CD4-positive, alpha-beta memory T cell (primary cell): ENCODE measurements at regions of chr12 and their contacts with region 1.

Region 1: DNA sequence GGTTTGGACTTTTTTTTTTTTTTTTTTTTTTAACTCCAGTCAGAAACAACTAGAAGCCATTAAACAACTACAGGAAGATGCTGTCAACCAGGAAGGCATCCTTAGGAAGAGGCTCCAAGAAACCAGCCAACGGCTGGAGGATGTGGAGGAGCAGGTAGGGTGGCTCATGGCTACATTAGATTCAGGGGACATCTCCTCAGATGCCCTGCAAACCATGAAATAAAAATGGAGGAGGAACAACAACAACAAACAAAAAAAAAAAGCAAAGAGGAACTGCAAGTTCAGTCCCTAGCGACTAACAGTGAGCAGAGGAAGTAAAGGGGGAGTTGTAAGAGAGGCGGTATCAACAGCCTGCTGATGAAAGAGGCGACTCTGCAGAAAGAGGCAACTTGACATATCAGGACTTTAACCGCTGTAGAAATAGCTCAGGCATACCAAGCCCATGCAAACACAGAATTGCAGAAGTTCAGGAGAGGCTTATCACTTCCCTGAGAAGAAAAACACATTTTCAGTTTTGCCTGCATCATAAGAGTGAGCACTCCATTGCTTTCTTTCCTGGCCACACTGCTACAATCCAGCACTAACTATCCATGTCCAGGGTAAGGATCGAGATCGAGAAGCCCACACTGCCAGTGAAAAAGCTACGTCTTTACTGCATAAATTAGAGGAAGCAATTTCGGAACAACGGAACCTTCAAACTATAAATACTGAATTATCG is 103.5 kb upstream of the BCAT1 start:
- DNase-seq: peak; percentile 82 to 91 (median 88)
- H3K4me3 ChIP-seq: peak overlapping the region; percentile 72 to 88
- H3K4me3 Mint-ChIP-seq: peak overlapping the region; percentile 93 to 100 (median 96)
- H3K27ac ChIP-seq: peak overlapping the region; percentile 52
- H3K27ac Mint-ChIP-seq: peak overlapping the region; percentile 97 to 99 (median 98)
- H3K4me1 ChIP-seq: peaks cover 51% of the 10 kb centered on the region
- H3K4me1 Mint-ChIP-seq: peaks cover 33 to 56% (median 44%) of the 10 kb centered on the region in 4 donors
- H3K27me3 ChIP-seq: no peaks in the 10 kb centered on the region
- H3K27me3 Mint-ChIP-seq: no peaks in the 10 kb centered on the region

Region 2: GRCh38 chr12:24922090-24922489 is 130.3 kb before region 1 on chr12:
- CTCF ChIA-PET with region 1: no interaction called
- POLR2A ChIA-PET with region 1: no interaction called
- intact Hi-C with region 1: no loop called
- DNase-seq: no peak
- H3K4me3 ChIP-seq: no peak overlapping the region
- H3K4me3 Mint-ChIP-seq: no peak overlapping the region
- H3K27ac ChIP-seq: no peak overlapping the region
- H3K27ac Mint-ChIP-seq: no peak overlapping the region
- H3K4me1 ChIP-seq: no peaks in the 10 kb centered on the region
- H3K4me1 Mint-ChIP-seq: peaks cover 0 to 4% (median under 1%) of the 10 kb centered on the region in 4 donors
- H3K27me3 ChIP-seq: no peaks in the 10 kb centered on the region
- H3K27me3 Mint-ChIP-seq: no peaks in the 10 kb centered on the region

Region 3: DNA sequence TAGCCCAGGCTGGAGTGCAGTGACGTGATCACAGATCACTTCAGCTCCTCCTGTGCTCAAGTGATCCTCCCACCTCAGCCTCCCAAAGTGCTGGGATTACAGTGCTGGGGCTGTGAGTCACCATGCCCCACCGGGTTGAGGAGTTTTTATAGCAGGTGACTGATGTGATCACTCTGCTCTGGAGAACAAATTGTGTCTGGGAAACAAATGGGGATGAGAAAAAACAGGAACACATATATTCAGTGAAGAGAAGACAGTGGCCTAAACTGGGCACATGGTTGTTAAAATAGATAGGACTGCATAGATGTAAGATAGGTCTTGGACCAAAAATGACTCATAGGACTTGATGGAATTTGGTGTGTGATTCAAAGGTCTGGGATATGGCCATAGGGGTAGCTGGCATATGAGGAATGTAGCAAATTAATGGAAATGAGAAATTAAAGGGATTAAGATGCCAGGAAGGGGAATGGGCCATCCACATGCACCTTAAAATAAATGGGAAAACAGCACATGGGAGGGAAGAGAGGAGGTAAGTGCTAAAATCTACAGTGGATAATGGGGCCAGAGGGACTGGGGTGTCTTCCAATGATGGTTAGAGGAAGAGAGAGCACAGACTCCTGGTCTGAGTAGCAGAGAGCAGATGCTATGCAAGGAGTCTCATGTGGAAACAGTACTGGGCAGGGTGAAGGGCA is 114.7 kb before region 1 on chr12:
- CTCF ChIA-PET with region 1: no interaction called
- POLR2A ChIA-PET with region 1: no interaction called
- intact Hi-C with region 1: no loop called
- DNase-seq: no peak
- H3K4me3 ChIP-seq: no peak overlapping the region
- H3K4me3 Mint-ChIP-seq: no peak overlapping the region
- H3K27ac ChIP-seq: no peak overlapping the region
- H3K27ac Mint-ChIP-seq: no peak overlapping the region
- H3K4me1 ChIP-seq: no peaks in the 10 kb centered on the region
- H3K4me1 Mint-ChIP-seq: peaks cover 0 to 2% (median under 1%) of the 10 kb centered on the region in 4 donors
- H3K27me3 ChIP-seq: no peaks in the 10 kb centered on the region
- H3K27me3 Mint-ChIP-seq: peaks cover 5 to 9% of the 10 kb centered on the region in 2 donors

Region 4: DNA sequence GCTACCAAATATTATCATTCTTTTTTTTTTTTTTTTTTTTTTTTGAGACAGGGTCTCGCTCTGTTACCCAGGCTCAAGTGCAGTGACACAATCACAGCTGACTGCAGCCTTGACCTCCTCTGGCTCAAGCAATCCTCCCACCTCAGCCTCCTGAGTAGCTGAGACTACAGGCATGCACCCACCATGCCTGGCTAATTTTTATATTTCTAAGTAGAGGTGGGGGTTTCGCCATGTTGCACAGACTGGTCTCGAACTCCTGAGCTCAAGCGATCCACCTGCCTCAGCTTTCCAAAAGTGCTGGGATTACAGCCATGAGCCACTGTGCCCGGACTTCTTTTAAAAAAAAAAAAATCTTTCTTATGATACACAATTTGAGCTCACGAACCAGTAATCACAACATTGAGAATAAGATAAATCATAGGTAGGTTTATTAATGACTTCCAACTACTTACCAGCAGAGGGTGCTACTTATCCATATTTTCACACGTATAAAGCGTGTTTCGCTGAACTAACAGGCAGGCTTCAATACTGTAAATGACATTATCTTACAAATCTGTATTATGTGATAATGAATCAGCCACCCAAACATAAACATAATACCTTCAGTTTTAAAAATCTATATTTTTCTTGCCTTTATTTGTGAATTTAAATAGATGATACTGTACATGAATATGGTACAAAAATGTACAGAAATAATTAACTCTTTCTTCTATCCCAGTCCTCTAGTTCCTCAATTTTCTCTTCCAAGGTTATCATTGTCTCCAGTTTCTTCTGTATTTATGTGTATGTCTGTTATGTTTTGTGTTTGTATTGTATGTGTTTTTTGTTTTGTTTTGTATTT is 60.9 kb before region 1 on chr12:
- CTCF ChIA-PET with region 1: interaction called, 21 read pairs
- POLR2A ChIA-PET with region 1: no interaction called
- intact Hi-C with region 1: loop called (anchors 1 kb)
- DNase-seq: peak; percentile 41 to 71 (median 67)
- H3K4me3 ChIP-seq: no peak overlapping the region
- H3K4me3 Mint-ChIP-seq: no peak overlapping the region
- H3K27ac ChIP-seq: no peak overlapping the region
- H3K27ac Mint-ChIP-seq: peak overlapping the region in 1 of 7 donors; percentile 61
- H3K4me1 ChIP-seq: no peaks in the 10 kb centered on the region
- H3K4me1 Mint-ChIP-seq: no peaks in the 10 kb centered on the region
- H3K27me3 ChIP-seq: no peaks in the 10 kb centered on the region
- H3K27me3 Mint-ChIP-seq: peaks cover 0 to 2% of the 10 kb centered on the region in 2 donors

Region 5: GRCh38 chr12:25063873-25064628 is 11.7 kb after region 1 on chr12:
- CTCF ChIA-PET with region 1: interaction called, 15 read pairs
- POLR2A ChIA-PET with region 1: interaction called, 16 read pairs
- intact Hi-C with region 1: loop called (anchors 2 kb)
- DNase-seq: no peak
- H3K4me3 ChIP-seq: no peak overlapping the region
- H3K4me3 Mint-ChIP-seq: no peak overlapping the region
- H3K27ac ChIP-seq: no peak overlapping the region
- H3K27ac Mint-ChIP-seq: peak overlapping the region in 1 of 7 donors; percentile 3
- H3K4me1 ChIP-seq: no peaks in the 10 kb centered on the region
- H3K4me1 Mint-ChIP-seq: peaks cover 16 to 36% (median 19%) of the 10 kb centered on the region in 4 donors
- H3K27me3 ChIP-seq: no peaks in the 10 kb centered on the region
- H3K27me3 Mint-ChIP-seq: no peaks in the 10 kb centered on the region

Region 6: DNA sequence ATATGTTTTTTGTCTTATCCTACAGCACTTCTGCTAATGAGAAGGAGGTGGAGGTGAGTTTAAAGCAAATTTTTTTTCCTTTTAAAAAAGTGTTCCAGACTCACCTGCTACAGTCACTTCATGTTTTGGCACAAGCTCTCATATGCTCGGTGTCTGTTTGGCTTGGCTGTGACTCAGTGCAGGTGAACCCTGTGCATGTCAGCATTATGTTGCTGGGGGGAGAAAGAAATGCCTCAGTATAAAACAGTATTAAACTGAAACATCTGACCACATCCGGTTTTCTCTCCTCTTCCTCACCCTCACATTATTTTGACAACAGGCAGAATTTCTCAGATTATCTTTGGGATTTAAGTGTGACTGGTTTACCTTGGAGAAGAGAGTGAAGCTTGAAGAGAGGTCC is 37.4 kb after region 1 on chr12:
- CTCF ChIA-PET with region 1: no interaction called
- POLR2A ChIA-PET with region 1: interaction called, 3 read pairs
- intact Hi-C with region 1: loop called (anchors 5 kb)
- DNase-seq: no peak
- H3K4me3 ChIP-seq: no peak overlapping the region
- H3K4me3 Mint-ChIP-seq: no peak overlapping the region
- H3K27ac ChIP-seq: no peak overlapping the region
- H3K27ac Mint-ChIP-seq: peak overlapping the region in 5 of 7 donors; percentile 12 to 87 (median 26)
- H3K4me1 ChIP-seq: peaks cover 10% of the 10 kb centered on the region
- H3K4me1 Mint-ChIP-seq: peaks cover 9 to 21% (median 17%) of the 10 kb centered on the region in 4 donors
- H3K27me3 ChIP-seq: no peaks in the 10 kb centered on the region
- H3K27me3 Mint-ChIP-seq: no peaks in the 10 kb centered on the region

Region 7: GRCh38 chr12:25151476-25151875 is 99.1 kb after region 1 on chr12:
- CTCF ChIA-PET with region 1: interaction called, 10 read pairs
- POLR2A ChIA-PET with region 1: interaction called, 7 read pairs
- intact Hi-C with region 1: no loop called
- DNase-seq: no peak
- H3K4me3 ChIP-seq: no peak overlapping the region
- H3K4me3 Mint-ChIP-seq: no peak overlapping the region
- H3K27ac ChIP-seq: no peak overlapping the region
- H3K27ac Mint-ChIP-seq: peak overlapping the region in 1 of 7 donors; percentile 5
- H3K4me1 ChIP-seq: peaks cover 3% of the 10 kb centered on the region
- H3K4me1 Mint-ChIP-seq: peaks cover 0 to 8% (median 6%) of the 10 kb centered on the region in 4 donors
- H3K27me3 ChIP-seq: no peaks in the 10 kb centered on the region
- H3K27me3 Mint-ChIP-seq: no peaks in the 10 kb centered on the region

Region 8: GRCh38 chr12:25250744-25251730 is 198.7 kb after region 1 on chr12 and contains the start of gene KRAS:
- CTCF ChIA-PET with region 1: no interaction called
- POLR2A ChIA-PET with region 1: interaction called, 9 read pairs
- intact Hi-C with region 1: loop called (anchors 2 kb)
- DNase-seq: peak; percentile 90 to 93 (median 91)
- H3K4me3 ChIP-seq: peak within 1 kb of the TSS; percentile 67 to 90
- H3K4me3 Mint-ChIP-seq: peak within 1 kb of the TSS; percentile 92 to 96 (median 94)
- H3K27ac ChIP-seq: peak within 1 kb of the TSS; percentile 68
- H3K27ac Mint-ChIP-seq: peak within 1 kb of the TSS; percentile 91 to 98 (median 95)
- H3K4me1 ChIP-seq: peaks cover 33% of the 10 kb centered on the region
- H3K4me1 Mint-ChIP-seq: peaks cover 13 to 56% (median 40%) of the 10 kb centered on the region in 4 donors
- H3K27me3 ChIP-seq: no peaks in the 10 kb centered on the region
- H3K27me3 Mint-ChIP-seq: no peaks in the 10 kb centered on the region
- total RNA-seq, gene KRAS: 34.4 to 34.8 TPM